AG04449 (cell line): ENCODE measurements at regions of chr1 and their contacts with region 1.

Region 1: GRCh38 chr1:156356875-156357534 is 12.0 kb upstream of the RHBG start:
- DNase-seq: no peak
- H3K4me3 ChIP-seq: no peak overlapping the region
- CTCF ChIP-seq: no peak

Region 2: GRCh38 chr1:156096640-156097391 is 260.2 kb before region 1 on chr1:
- CTCF ChIA-PET with region 1: interaction called, 15 read pairs
- POLR2A ChIA-PET with region 1: no interaction called
- DNase-seq: no peak
- H3K4me3 ChIP-seq: peak overlapping the region; percentile 3; the same call in 1 of the 2 replicates
- CTCF ChIP-seq: peak; percentile 99

Region 3: DNA sequence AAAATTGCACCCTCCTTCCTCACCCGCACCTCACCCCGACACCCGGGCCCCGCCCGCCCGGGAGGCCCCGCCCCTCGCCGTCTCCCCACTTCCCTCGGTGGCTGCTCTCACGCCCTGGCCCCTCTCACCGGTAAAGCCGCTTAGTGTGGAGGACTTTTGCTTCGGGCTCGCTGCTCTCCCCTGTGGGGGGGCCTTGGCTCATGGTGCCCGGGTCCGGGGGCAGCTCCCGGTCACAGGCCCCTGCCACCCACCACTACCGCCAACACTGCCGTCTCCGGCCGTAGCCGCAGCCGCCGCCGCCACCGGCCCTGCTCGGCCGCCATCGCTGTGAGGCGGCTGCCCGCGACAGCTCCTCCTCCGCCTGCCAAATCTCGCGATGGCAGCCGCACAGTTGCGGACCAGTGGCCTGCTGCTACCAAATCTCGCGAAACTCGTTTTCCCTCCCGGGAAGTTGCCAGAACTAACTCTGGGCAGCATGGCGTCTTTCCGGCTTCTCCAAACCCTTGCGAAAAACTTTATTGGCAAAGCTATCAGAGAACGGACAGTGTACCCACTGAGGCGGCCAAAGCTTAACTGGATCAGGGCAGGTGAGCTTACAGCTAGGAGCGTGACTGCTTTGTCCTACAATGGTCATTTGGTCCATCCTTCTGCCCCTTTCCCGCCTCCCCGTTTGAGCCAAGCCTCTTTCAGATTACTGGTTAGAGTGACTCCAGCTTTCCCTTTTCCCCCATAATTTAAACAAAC is 74.4 kb before region 1 on chr1 and contains the start of gene SMG5:
- CTCF ChIA-PET with region 1: interaction called, 18 read pairs
- POLR2A ChIA-PET with region 1: no interaction called
- DNase-seq: peak; percentile 93
- H3K4me3 ChIP-seq: peak within 1 kb of the TSS; percentile 86
- CTCF ChIP-seq: no peak

Region 4: DNA sequence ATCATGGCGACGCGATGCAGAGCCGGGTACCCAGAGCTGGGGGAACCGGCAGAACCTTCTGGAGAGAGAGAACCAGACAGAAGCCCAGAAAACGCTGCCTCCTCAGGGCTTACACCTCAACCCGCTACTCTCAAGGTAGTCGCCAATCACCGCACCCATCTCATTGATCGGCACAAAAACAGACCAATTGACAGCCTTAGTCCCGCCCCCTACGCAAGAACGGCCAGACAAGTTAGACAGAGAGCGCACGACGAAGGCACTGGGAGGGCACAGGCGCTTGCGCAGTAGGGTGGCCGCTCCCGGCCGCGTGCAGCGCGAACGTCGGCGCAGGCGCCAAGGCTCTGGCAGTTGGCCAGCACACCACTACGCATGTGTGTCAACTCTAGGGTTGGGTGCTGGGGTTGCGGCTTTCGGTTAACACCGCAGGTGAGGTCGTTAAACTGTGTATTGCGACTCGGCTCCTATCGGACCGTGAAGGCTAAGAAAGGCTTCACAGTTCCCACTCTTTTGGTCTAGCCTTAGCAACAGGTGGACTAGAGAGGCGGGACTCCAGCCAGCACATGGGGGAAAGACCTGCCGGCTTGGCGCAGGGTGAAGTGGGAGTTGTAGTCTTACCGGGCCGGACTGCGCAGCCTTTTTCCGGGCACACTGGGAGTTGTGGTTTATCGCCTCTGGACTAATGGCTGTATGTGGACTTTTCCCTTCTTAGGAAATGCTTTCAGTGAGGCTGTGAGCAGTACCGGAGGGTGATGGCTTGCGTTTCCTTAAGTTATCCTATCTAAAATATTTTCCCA is 18.6 kb before region 1 on chr1 and contains the starts of genes CCT3 and TSACC:
- CTCF ChIA-PET with region 1: interaction called, 27 read pairs
- POLR2A ChIA-PET with region 1: no interaction called
- DNase-seq: peak; percentile 99
- H3K4me3 ChIP-seq: peak within 1 kb of the TSS; percentile 97
- CTCF ChIP-seq: no peak

Region 5: DNA sequence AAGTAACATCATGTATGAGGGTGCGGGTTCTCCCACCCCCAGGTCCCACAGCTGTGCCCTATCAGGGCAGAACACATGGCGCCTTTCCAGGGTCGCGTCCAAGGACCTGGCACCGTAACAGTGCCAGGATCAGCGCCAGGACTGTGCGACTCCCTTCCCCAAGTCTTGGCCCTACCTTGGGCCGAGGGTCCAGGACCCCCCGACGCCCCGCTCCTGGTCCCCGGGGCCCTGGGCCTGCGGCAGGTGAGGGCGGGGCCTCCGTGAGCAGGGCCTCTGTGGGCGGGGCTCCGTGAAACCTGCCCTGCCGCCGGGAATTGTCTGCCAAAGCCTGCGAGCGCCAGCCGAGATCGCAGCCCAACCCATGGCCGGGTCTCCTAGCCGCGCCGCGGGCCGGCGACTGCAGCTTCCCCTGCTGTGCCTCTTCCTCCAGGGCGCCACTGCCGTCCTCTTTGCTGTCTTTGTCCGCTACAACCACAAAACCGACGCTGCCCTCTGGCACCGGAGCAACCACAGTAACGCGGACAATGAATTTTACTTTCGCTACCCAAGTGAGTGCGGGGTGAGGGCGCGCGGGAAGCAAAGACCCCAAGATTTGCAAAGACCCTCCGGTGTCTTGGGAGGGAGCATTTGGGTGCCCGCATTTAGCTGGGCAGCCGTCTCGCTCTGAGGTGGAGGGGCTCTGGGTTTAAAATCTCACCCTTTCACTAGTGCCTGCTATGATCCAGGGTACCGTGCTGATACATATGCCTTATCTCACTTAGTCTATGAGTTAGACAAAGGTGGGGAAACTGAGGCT is 12.1 kb after region 1 on chr1 and contains the start of gene RHBG:
- CTCF ChIA-PET with region 1: interaction called, 56 read pairs
- POLR2A ChIA-PET with region 1: no interaction called
- DNase-seq: no peak
- H3K4me3 ChIP-seq: peak within 1 kb of the TSS; percentile 4
- CTCF ChIP-seq: no peak

Region 6: GRCh38 chr1:156524481-156524869 is 167.5 kb after region 1 on chr1:
- CTCF ChIA-PET with region 1: no interaction called
- POLR2A ChIA-PET with region 1: no interaction called
- DNase-seq: no peak
- H3K4me3 ChIP-seq: no peak overlapping the region
- CTCF ChIP-seq: no peak